ENCODE measurements at regions of chr4 and their contacts with region 1.

Region 1: GRCh38 chr4:109433205-109434006 is at the start of gene SEC24B:
- DNase-seq: peak; percentile 84 to 91 (median 90)
- ATAC-seq: peak; percentile 95
- H3K4me3 ChIP-seq: peak within 1 kb of the TSS; percentile 74
- H3K4me3 Mint-ChIP-seq: peak within 1 kb of the TSS; percentile 83 to 94 (median 88)
- H3K27ac ChIP-seq: peak within 1 kb of the TSS; percentile 93
- H3K27ac Mint-ChIP-seq: peak within 1 kb of the TSS; percentile 75 to 95 (median 93)
- H3K4me1 ChIP-seq: peaks cover 11 to 19% of the 10 kb centered on the region in 2 donors
- H3K4me1 Mint-ChIP-seq: peaks cover 29 to 61% (median 54%) of the 10 kb centered on the region in 7 donors
- H3K27me3 ChIP-seq: no peaks in the 10 kb centered on the region
- H3K27me3 Mint-ChIP-seq: no peaks in the 10 kb centered on the region
- total RNA-seq, gene SEC24B: 29.2 to 41.8 (median 35.2) TPM

Region 2: DNA sequence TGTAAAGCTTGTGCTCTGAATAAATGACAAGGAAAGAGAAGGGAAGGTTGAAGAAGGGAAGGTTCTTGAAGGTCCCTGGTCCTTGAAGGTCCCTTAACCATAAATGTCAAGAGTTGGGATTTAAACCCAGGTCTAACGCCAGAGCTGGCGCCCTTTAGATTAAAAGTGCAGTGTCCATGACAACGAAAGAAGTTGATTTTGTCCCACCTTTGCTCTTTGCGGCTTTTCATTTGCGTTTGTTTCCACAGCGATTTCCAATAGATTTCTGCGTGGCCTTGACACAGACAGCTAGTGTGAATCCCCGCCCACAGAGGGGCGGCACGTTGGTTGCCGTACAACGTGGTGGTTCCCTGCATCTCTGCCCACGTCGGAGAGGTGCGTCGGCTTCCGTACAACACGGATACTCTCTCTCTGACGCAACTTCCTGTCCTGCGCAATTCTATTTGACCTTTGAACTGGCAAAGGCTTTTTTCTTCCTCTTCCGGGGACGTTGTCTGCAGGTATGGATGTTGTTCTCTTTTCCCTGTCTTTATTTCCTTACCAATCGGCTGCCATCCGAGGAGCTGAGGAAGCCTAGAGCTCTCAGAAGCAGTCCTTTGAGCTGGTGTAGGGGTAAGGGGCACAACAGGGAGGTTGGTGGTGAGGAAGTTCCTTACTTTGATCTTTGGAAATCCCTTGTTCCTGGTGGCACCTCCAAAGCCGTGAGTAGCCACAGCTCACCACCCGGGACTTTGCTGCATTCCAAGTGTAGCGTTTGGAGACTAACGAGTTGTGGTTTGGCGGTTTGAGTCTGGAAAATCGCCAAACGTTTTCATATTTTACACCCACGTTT is 813.1 kb before region 1 on chr4 and contains the start of gene RPL34:
- CTCF ChIA-PET with region 1: no interaction called
- POLR2A ChIA-PET with region 1: interaction called, 3 read pairs
- intact Hi-C with region 1: loop called in 1 of 2 experiments (anchors 1 kb)
- DNase-seq: peak; percentile 85 to 99 (median 96)
- ATAC-seq: peak; percentile 100
- H3K4me3 ChIP-seq: peak within 1 kb of the TSS; percentile 98
- H3K4me3 Mint-ChIP-seq: peak within 1 kb of the TSS; percentile 87 to 99 (median 96)
- H3K27ac ChIP-seq: peak within 1 kb of the TSS; percentile 90
- H3K27ac Mint-ChIP-seq: peak within 1 kb of the TSS; percentile 95 to 99 (median 97)
- H3K4me1 ChIP-seq: peaks cover 29 to 30% of the 10 kb centered on the region in 2 donors
- H3K4me1 Mint-ChIP-seq: peaks cover 33 to 81% (median 66%) of the 10 kb centered on the region in 7 donors
- H3K27me3 ChIP-seq: no peaks in the 10 kb centered on the region
- H3K27me3 Mint-ChIP-seq: peaks cover 0 to 3% (median 0%) of the 10 kb centered on the region in 5 donors
- total RNA-seq, gene RPL34: 1,411 to 3,442 (median 3,215) TPM

Region 3: GRCh38 chr4:108650212-108651013 is 783.0 kb before region 1 on chr4 and contains the start of gene OSTC:
- CTCF ChIA-PET with region 1: no interaction called
- POLR2A ChIA-PET with region 1: no interaction called
- intact Hi-C with region 1: loop called in 1 of 2 experiments (anchors 1 kb)
- DNase-seq: peak; percentile 88 to 95 (median 91)
- ATAC-seq: peak; percentile 94
- H3K4me3 ChIP-seq: peak within 1 kb of the TSS; percentile 98
- H3K4me3 Mint-ChIP-seq: peak within 1 kb of the TSS; percentile 90 to 99 (median 94)
- H3K27ac ChIP-seq: peak within 1 kb of the TSS; percentile 96
- H3K27ac Mint-ChIP-seq: peak within 1 kb of the TSS; percentile 89 to 99 (median 98)
- H3K4me1 ChIP-seq: peaks cover 8 to 13% of the 10 kb centered on the region in 2 donors
- H3K4me1 Mint-ChIP-seq: peaks cover 22 to 49% (median 41%) of the 10 kb centered on the region in 7 donors
- H3K27me3 ChIP-seq: no peaks in the 10 kb centered on the region
- H3K27me3 Mint-ChIP-seq: no peaks in the 10 kb centered on the region
- total RNA-seq, gene OSTC: 31.8 to 98.2 (median 55.6) TPM

Region 4: DNA sequence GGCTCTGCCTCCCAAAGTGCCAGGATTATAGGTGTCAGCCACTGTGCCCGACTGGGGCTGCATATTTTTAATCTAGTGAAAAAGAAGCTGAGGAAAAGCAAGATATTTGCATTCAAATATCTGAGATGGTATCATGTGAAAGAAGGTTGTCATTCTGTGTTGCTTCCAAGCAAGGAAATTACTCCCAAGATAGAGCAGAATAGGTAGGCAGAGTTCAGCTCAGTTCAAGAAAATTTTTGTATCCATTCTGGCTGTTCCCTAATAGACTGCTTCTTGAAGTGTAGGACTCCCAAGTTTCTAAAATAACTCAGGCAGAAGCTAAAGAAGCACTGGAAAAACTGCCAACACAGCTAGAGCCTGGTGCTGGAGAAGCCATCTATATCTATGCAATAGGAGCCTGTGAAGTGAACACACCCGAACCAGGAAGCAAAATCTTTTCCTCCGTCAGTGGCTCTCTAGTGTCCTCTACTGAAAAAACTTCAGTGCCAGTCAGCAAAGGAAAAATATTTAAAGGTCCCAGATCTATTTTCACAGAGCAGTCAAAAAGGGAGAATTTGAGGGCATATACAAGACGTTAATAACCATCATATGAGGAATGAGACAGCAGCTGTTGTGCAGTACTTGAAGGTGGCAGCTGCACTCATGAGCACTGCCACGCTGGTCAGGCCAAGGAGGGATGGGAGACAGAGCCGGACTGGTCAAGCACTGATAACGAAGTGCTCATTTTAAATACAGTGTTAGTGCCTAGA is 140.9 kb after region 1 on chr4:
- CTCF ChIA-PET with region 1: interaction called, 4 read pairs
- POLR2A ChIA-PET with region 1: no interaction called
- intact Hi-C with region 1: loop called in 1 of 2 experiments (anchors 1 kb)
- DNase-seq: peak in 7 of 9 donors; percentile 24 to 61 (median 51)
- ATAC-seq: peak; percentile 82
- H3K4me3 ChIP-seq: peak overlapping the region; percentile 17
- H3K4me3 Mint-ChIP-seq: peak overlapping the region; percentile 42 to 83 (median 70)
- H3K27ac ChIP-seq: no peak overlapping the region
- H3K27ac Mint-ChIP-seq: peak overlapping the region in 8 of 9 donors; percentile 26 to 89 (median 75)
- H3K4me1 ChIP-seq: peaks cover 31 to 32% of the 10 kb centered on the region in 2 donors
- H3K4me1 Mint-ChIP-seq: peaks cover 47 to 91% (median 79%) of the 10 kb centered on the region in 7 donors
- H3K27me3 ChIP-seq: no peaks in the 10 kb centered on the region
- H3K27me3 Mint-ChIP-seq: no peaks in the 10 kb centered on the region

Region 5: GRCh38 chr4:109648266-109648996 is 215.0 kb after region 1 on chr4:
- CTCF ChIA-PET with region 1: no interaction called
- POLR2A ChIA-PET with region 1: interaction called, 6 read pairs
- intact Hi-C with region 1: loop called (anchors 1 to 2 kb)
- DNase-seq: peak in 7 of 9 donors; percentile 69 to 91 (median 84)
- ATAC-seq: peak; percentile 96
- H3K4me3 ChIP-seq: peak overlapping the region; percentile 41
- H3K4me3 Mint-ChIP-seq: peak overlapping the region in 8 of 10 donors; percentile 59 to 88 (median 82)
- H3K27ac ChIP-seq: peak overlapping the region; percentile 81
- H3K27ac Mint-ChIP-seq: peak overlapping the region in 5 of 9 donors; percentile 92 to 100 (median 97)
- H3K4me1 ChIP-seq: peaks cover 68 to 70% of the 10 kb centered on the region in 2 donors
- H3K4me1 Mint-ChIP-seq: peaks cover 21 to 43% (median 34%) of the 10 kb centered on the region in 7 donors
- H3K27me3 ChIP-seq: no peaks in the 10 kb centered on the region
- H3K27me3 Mint-ChIP-seq: no peaks in the 10 kb centered on the region

Region 6: DNA sequence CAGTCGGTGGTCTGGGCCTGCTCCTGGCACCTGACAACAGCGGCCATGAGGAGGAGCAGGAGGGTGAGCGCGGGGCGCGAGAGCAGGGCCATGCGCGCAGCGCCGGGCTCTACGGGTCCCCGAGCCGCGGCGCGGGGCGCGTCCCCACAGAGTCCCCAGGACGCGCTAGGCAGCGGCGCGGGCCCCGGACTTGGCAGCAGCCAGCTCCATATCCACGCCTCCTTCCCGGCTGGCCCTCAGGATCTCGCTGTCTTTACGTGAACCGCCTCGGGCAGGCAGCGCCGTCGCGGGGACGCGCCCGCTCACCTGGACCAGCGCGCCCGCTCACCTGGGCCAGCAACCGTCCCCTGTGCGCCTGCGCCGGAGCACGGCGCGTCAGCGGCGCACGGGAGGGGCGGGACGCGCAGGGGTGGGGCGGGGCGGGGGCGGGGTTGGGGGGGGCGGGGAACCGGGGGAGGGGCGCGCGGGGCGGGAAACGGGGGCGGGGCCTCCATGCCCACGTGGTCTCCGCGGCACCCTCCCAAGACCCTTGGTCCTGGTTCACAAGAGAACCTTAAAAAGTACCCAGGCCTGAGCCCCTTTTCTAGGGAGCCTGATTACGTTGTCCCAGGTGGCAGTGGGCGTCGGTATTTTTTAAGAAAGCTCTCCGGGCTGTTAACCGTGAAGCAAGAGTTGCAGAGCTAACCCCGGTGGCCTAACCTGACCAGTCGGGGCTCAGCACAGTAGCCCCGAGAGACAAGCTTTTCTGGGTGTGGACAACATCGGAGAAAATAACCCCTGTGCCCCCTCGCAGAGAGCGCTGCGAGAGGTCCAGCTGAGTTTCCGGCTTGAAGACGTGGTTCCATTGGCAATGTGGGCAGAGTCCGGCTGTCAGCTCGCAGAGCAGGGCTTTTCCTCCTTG is 296.6 kb after region 1 on chr4 and contains the start of gene PLA2G12A:
- CTCF ChIA-PET with region 1: interaction called, 7 read pairs
- POLR2A ChIA-PET with region 1: interaction called, 7 read pairs
- intact Hi-C with region 1: loop called (anchors 1 kb)
- DNase-seq: peak; percentile 75 to 91 (median 86)
- ATAC-seq: peak; percentile 96
- H3K4me3 ChIP-seq: peak within 1 kb of the TSS; percentile 96
- H3K4me3 Mint-ChIP-seq: peak within 1 kb of the TSS; percentile 88 to 96 (median 92)
- H3K27ac ChIP-seq: peak within 1 kb of the TSS; percentile 78
- H3K27ac Mint-ChIP-seq: peak within 1 kb of the TSS; percentile 64 to 95 (median 90)
- H3K4me1 ChIP-seq: peaks cover 10 to 14% of the 10 kb centered on the region in 2 donors
- H3K4me1 Mint-ChIP-seq: peaks cover 12 to 39% (median 30%) of the 10 kb centered on the region in 7 donors
- H3K27me3 ChIP-seq: no peaks in the 10 kb centered on the region
- H3K27me3 Mint-ChIP-seq: peaks cover 0 to 4% (median 0%) of the 10 kb centered on the region in 5 donors
- total RNA-seq, gene PLA2G12A: 11.5 to 15.4 (median 14.5) TPM

Measured in naive thymus-derived CD4-positive, alpha-beta T cell (primary cell).